ENCODE measurements at regions of chr11 and their contacts with region 1.

Region 1: DNA sequence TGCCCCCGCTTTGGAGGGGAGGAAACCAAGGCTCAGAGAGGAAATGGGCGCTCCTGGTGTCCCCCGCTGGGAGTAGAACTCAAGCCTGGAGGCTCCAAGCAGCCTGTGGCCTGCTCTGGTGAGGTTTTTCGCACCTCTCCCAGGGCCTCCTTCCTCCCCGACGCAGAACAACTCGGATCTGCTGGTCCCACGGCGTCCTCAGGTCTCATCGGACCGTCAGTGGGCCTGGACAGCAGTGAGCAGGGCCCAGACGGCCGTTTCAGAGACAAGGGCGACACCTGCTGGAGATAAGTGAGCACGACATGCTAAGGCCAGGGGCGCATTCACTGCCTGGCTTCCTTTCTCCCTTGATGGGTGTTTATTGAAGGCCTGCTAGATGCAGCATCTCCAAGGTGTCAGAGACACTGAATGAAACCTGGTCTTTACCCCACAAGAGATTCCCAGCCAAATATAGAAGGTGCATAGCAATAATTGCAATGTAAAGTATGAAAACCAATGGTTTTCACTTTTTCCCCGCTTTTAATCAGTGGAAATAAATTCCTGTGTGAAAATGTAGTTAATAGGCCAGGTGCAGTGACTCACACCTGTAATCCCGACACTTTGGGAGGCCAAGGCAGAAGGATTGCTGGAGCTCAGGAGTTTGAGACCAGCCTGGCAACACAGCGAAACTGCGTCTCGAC is 26.9 kb upstream of the CD82 start:
- DNase-seq: peak; percentile 84
- ATAC-seq: peak; percentile 95
- H3K4me3 Mint-ChIP-seq: no peak overlapping the region
- H3K27ac Mint-ChIP-seq: no peak overlapping the region
- H3K4me1 Mint-ChIP-seq: no peaks in the 10 kb centered on the region
- H3K27me3 Mint-ChIP-seq: no peaks in the 10 kb centered on the region

Region 2: GRCh38 chr11:44110231-44110679 is 428.3 kb before region 1 on chr11:
- CTCF ChIA-PET with region 1: no interaction called
- POLR2A ChIA-PET with region 1: no interaction called
- intact Hi-C with region 1: loop called in 1 of 2 experiments (anchors 1 kb)
- DNase-seq: peak; percentile 76
- ATAC-seq: peak; percentile 94
- H3K4me3 Mint-ChIP-seq: no peak overlapping the region
- H3K27ac Mint-ChIP-seq: peak overlapping the region; percentile 48
- H3K4me1 Mint-ChIP-seq: peaks cover 9% of the 10 kb centered on the region
- H3K27me3 Mint-ChIP-seq: no peaks in the 10 kb centered on the region

Region 3: DNA sequence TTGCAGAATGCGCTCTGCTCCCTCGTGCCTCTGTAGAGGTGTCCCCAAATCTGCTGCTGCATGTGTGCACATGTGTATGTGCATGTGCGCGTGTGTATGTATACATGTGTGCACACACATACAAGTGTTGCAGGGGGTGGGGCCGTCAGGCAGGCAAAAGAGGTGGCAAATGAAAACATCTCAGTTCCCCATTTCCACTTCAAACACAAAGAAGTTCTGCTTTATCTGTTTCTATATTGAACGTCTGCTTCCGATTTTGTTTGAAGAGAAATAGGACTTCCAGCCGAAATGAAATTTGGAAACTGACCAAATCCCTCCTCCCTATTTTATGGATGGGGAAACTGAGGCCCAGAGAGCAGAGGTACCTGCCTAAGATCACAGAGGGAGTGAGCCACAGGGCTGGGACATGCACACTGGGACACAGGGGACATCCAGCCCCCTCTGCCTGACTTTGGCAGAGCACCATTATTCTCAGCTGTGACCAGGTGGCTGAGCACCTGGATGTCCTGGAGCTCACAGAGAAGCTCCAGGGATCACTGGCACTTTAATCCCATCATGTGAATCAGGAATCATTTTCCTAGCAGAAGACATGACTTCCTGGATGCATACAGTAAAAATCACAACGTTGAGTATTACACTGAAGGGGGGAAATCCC is 187.4 kb before region 1 on chr11:
- CTCF ChIA-PET with region 1: no interaction called
- POLR2A ChIA-PET with region 1: no interaction called
- intact Hi-C with region 1: loop called in 1 of 2 experiments (anchors 5 kb)
- DNase-seq: no peak
- ATAC-seq: no peak
- H3K4me3 Mint-ChIP-seq: no peak overlapping the region
- H3K27ac Mint-ChIP-seq: no peak overlapping the region
- H3K4me1 Mint-ChIP-seq: no peaks in the 10 kb centered on the region
- H3K27me3 Mint-ChIP-seq: peaks cover 19% of the 10 kb centered on the region

Region 4: DNA sequence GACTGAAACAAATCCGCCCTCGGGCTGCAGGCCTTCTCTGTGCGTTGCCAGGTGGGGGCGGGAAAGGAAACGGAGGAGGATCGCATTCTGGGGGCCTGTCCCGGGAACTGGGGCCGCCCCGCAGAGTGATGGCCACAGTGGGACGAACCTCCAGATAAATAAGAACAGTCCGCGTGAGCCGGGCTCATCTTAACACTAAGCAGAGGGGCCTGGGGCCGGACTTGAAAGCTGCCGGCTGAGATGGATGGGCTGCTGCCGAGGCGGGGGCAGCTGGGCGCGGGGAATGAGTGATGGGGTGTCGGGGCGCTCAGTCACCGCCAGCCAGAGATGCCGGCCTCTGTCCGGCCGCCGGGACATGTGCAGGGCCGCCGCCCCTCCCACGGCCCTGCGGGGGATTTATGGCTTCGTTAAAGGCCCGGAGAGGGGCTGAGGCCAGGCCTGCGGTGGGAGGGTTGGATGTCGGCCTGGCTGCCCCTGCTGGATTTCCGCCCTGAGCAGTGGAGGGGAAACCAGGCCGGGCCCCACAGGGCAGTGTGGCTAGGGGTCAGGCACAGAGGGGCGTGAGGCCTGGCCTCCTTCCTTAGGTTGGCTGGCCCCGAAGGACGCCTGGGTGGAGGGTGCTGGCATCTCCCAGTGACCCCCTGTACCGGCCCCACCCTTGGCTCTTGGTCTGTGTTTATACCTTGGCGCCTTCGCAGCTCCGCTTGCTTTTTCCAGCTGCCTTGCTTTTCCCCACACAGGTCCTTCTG is 18.4 kb before region 1 on chr11:
- CTCF ChIA-PET with region 1: interaction called, 41 read pairs
- POLR2A ChIA-PET with region 1: interaction called, 3 read pairs
- intact Hi-C with region 1: loop called (anchors 1 kb)
- DNase-seq: no peak
- ATAC-seq: no peak
- H3K4me3 Mint-ChIP-seq: no peak overlapping the region
- H3K27ac Mint-ChIP-seq: no peak overlapping the region
- H3K4me1 Mint-ChIP-seq: peaks cover 2% of the 10 kb centered on the region
- H3K27me3 Mint-ChIP-seq: peaks cover 12% of the 10 kb centered on the region

Region 5: GRCh38 chr11:44893846-44894617 is 355.5 kb after region 1 on chr11:
- CTCF ChIA-PET with region 1: no interaction called
- POLR2A ChIA-PET with region 1: no interaction called
- intact Hi-C with region 1: no loop called
- DNase-seq: peak; percentile 79
- ATAC-seq: peak; percentile 93
- H3K4me3 Mint-ChIP-seq: no peak overlapping the region
- H3K27ac Mint-ChIP-seq: no peak overlapping the region
- H3K4me1 Mint-ChIP-seq: peaks cover 1% of the 10 kb centered on the region
- H3K27me3 Mint-ChIP-seq: no peaks in the 10 kb centered on the region